ENCODE measurements at regions of chr10 and their contacts with region 1.

Region 1: DNA sequence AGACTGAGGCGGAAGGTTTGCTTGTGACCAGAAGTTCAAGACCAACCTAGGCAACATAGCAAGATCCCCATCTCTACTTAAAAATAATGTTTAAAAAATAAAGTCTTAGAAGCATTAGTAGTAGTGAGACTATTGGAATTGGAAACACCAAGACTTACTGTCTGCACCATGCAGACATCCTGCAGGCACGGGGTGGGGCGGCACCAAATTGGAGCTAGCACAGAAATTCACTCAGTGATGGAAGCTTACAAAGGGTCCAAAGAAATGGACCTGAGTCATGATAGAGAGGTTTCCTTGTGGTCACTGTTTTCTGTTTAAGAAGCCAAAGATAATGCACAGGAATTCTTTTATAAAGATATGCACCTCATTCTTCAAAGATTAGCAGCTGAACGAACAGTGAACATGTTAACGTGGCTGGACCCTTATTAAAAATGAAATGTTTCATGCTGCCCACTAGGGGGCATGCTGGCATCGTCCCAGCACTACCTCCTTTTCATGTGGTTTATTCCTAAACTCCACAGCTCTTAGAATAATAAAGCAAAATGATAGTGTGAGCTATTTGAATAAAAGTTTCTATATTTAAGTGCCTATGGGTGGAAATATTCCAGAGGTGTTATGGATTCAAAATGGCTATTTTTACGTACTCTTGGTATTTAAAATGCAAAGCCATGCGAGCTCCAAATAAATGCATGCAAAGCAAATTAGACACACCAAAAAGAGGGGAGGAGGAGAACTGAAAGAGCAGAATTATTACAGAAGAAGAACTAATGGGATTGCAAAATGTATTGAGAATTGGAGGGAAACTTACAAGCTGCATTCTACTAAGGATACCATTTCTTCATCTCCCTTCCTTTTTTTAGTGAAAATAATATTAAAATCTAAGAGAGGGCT is 28.6 kb downstream of the PDSS1 start:
- DNase-seq: peak; percentile 67 to 72 (median 71)
- ATAC-seq: peak; percentile 83 to 93 (median 89)
- H3K4me3 ChIP-seq: no peak overlapping the region
- H3K27ac ChIP-seq: no peak overlapping the region
- H3K4me1 ChIP-seq: no peaks in the 10 kb centered on the region
- H3K27me3 ChIP-seq: no peaks in the 10 kb centered on the region
- CTCF ChIP-seq: peak; percentile 75 to 89 (median 84)
- POLR2A ChIP-seq: no peak

Region 2: GRCh38 chr10:26881600-26882331 is 155.7 kb after region 1 on chr10:
- intact Hi-C with region 1: loop called (anchors 5 to 10 kb)
- DNase-seq: no peak
- ATAC-seq: peak; percentile 91 to 97 (median 92)
- H3K4me3 ChIP-seq: no peak overlapping the region
- H3K27ac ChIP-seq: no peak overlapping the region
- H3K4me1 ChIP-seq: no peaks in the 10 kb centered on the region
- H3K27me3 ChIP-seq: no peaks in the 10 kb centered on the region
- CTCF ChIP-seq: peak; percentile 56 to 90 (median 64)
- POLR2A ChIP-seq: no peak

Region 3: DNA sequence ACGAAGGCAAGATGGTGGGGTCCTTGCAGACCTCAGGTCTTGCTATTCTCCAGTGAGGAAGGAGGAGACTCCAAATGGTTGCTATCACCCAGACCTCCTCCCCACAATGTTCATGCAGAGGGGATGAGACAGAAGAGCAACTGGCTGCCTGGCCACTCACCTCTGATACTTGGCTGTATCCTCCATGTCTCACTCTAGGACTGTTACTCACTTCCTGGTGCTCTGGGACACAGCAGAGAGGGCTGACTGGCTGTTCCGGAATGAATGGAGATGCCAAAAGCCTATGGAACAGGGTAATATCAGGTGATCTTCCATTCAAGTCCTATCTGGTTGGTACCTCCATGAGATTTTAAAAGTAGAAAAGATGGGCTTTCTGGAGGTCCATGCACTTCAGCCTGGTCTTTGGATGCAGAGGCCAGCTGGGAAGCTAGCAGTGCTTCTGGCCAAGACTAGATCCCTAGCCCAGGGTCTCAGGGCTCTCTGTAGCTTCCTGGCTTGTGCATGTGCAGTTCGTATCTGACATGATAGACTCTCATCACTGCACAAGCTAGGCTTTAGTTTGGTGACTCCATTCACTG is 161.6 kb after region 1 on chr10:
- intact Hi-C with region 1: loop called (anchors 5 to 10 kb)
- DNase-seq: no peak
- ATAC-seq: no peak
- H3K4me3 ChIP-seq: no peak overlapping the region
- H3K27ac ChIP-seq: no peak overlapping the region
- H3K4me1 ChIP-seq: no peaks in the 10 kb centered on the region
- H3K27me3 ChIP-seq: no peaks in the 10 kb centered on the region
- CTCF ChIP-seq: no peak
- POLR2A ChIP-seq: no peak

Region 4: DNA sequence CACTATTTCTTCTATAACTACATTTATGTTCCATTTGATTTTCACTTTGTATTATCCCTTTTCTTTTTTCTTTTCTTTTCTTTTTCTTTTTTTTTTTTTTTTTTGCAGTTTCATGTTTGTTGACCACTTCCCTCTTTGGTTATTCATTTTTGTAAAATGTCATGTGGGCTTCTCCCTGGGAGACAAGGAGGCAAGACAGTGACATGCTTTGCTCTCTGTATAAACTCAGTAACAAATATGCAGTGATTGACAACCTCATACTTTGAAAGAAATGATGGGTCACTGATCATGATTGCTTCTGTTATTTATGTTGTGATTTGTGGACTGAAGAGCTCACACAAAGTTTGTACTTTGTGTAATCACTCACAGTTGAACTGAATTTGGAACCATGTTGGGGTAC is 224.9 kb after region 1 on chr10:
- intact Hi-C with region 1: no loop called
- DNase-seq: no peak
- ATAC-seq: no peak
- H3K4me3 ChIP-seq: no peak overlapping the region
- H3K27ac ChIP-seq: no peak overlapping the region
- H3K4me1 ChIP-seq: no peaks in the 10 kb centered on the region
- H3K27me3 ChIP-seq: no peaks in the 10 kb centered on the region
- CTCF ChIP-seq: no peak
- POLR2A ChIP-seq: no peak

Measured in right lobe of liver (tissue), 6 donors.